G401 (cell line): ENCODE measurements at regions of chr6 and their contacts with region 1.

Region 1: DNA sequence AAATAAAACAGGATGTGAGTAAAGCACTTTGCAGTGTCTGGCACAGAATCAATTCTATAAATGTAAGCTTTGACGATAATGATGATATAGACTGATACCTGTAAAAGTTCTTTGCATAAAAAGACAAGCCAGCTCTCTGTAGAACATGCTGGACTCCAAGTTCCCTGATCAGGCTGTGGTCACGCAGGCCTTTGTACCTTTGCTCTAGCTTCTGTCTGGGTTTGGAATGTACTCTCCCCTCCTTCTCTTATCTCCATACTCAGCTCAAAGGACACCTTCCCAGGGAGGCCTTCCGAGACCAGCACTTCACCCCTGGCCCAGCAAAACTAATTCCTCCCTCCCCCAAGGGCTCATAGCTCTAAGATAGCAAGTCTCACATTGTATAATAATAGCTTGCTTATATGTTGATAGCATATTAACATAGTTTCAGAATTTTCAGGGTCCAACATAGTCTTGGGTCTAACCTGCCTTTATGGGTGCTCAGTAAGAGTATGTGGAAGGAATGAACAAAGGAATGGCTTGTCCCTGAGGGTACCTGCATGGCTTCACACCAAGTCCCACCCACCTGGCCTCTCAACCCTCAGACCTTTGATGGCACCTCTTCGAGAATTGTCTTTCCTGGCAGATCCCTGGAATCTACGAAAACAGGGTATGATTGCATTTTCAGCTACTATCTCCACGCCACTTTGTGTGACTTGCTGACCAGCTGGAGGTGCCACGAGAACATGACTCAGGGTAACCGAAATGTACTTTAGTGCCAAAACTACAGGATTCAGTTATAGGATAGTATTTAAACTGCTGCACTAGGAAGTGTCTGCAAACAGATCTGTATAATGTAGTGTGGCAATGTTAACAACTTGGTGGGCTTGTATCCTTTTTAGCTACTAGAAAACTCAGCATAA is 41.7 kb upstream of the PIM1 start:
- DNase-seq: no peak

Region 2: GRCh38 chr6:37038292-37039198 is 89.7 kb before region 1 on chr6:
- in situ Hi-C with region 1: no loop called
- DNase-seq: no peak

Region 3: DNA sequence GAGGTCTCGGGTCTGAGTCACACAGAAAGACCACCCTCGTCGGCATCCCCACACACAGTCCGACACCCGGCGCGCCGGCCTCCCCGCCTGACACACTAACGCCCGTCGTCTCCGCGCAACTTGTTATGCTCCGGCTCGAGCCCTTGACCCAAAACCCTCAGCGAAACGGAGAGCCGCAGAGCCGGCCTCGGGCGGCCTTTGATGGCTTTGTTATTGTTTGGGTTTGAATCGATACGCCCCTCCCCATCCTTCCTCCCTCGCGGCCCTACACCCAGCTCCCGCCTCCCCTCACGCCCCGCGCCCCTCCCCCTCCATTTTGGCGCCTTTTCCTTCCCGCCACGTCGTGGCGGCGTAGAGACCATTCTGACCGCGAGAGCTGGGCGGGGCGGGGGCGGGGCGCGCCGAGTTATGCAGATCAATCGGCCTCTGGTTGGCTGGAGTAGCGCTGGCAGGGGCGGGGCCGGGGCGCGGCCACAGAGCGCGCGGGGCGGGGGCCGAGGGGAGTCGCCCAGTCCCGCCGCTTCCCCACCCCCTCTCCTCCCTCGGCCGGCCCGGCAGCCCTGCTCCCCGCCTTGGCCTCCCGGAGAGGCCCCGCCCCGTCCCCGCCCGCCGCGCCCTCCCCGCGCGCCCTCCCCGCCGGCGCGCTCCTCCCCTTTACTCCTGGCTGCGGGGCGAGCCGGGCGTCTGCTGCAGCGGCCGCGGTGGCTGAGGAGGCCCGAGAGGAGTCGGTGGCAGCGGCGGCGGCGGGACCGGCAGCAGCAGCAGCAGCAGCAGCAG is 41.5 kb after region 1 on chr6 and contains the start of gene PIM1:
- in situ Hi-C with region 1: loop called (anchors 5 kb)
- DNase-seq: peak; percentile 99
- total RNA-seq, gene PIM1: 70.4 and 71.6 TPM in 2 replicates